CD8-positive, alpha-beta T cell (primary cell): ENCODE measurements at regions of chr10 and their contacts with region 1.

Region 1: DNA sequence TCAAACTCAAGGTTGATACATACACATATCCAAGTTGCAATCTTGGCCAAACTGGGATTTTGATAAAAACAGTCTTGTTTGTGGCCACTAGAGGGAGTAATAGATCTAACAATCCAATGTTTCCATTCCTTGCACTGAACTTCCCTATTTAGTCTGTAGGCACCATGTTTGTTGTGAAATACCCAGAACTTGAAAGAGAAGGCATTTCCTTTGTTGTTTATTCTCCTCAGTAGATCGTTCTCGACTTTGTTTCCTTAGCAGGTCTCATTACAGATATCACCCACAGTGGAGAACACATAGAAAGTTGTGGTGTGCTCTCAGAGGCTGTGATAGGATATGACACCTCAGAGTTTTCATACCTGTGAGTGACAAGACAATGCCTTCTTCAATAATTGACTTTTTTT is 70.3 kb upstream of the MXI1 start:
- DNase-seq: peak in 2 of 9 experiments; percentile 67 to 79
- ATAC-seq: peak; percentile 74
- H3K4me3 ChIP-seq: no peak overlapping the region
- H3K4me3 Mint-ChIP-seq: no peak overlapping the region
- H3K27ac ChIP-seq: peak overlapping the region in 1 of 2 experiments; percentile 2
- H3K27ac Mint-ChIP-seq: peak overlapping the region; percentile 23
- H3K4me1 ChIP-seq: peaks cover 9% of the 10 kb centered on the region
- H3K4me1 Mint-ChIP-seq: peaks cover 21% of the 10 kb centered on the region
- H3K27me3 ChIP-seq: no peaks in the 10 kb centered on the region
- H3K27me3 Mint-ChIP-seq: no peaks in the 10 kb centered on the region
- CTCF ChIP-seq: peak; percentile 97

Region 2: DNA sequence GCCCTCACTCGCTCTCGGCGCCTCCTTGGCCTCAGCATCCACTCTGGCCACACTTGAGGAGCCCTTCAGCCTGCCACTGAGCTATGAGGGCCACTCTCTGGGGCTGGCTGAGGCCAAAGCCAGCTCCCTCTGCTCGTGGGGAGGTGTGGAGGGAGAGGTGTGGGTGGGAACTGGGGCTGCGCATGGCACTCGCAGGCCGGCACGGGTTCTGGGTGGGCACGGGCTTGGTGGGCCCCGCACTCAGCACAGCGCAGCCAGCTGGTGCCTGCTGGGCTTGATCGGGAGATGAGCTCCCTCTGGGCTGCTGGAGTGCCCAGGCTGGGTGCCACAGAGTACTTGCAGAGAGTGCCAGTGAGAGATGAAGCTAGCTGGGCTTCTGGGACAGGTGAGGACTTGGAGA is 1089.3 kb before region 1 on chr10:
- CTCF ChIA-PET with region 1: no interaction called
- POLR2A ChIA-PET with region 1: no interaction called
- intact Hi-C with region 1: no loop called
- DNase-seq: no peak
- ATAC-seq: no peak
- H3K4me3 ChIP-seq: no peak overlapping the region
- H3K4me3 Mint-ChIP-seq: no peak overlapping the region
- H3K27ac ChIP-seq: no peak overlapping the region
- H3K27ac Mint-ChIP-seq: no peak overlapping the region
- H3K4me1 ChIP-seq: no peaks in the 10 kb centered on the region
- H3K4me1 Mint-ChIP-seq: no peaks in the 10 kb centered on the region
- H3K27me3 ChIP-seq: no peaks in the 10 kb centered on the region
- H3K27me3 Mint-ChIP-seq: no peaks in the 10 kb centered on the region
- CTCF ChIP-seq: no peak

Region 3: DNA sequence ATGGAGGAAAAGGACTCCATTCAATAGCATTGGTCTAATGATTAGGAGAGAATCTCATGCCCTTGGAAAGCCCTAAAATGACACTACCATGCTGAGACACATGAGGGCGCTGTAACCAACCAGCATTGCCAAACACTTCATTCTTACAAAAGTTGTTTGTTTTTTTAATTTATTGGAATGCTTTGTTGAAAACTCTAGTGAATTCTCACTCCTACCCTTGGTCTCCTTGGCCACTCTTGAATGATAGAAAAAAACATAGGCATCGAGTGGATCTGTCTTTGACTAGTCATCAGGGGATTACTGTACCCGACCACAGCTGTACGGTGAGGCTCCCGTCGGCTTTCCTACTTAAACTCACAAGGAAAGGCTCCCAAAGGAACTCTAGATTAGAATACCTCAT is 158.7 kb before region 1 on chr10:
- CTCF ChIA-PET with region 1: interaction called, 10 read pairs
- POLR2A ChIA-PET with region 1: no interaction called
- intact Hi-C with region 1: no loop called
- DNase-seq: peak; percentile 31 to 75 (median 71)
- ATAC-seq: peak; percentile 70
- H3K4me3 ChIP-seq: no peak overlapping the region
- H3K4me3 Mint-ChIP-seq: no peak overlapping the region
- H3K27ac ChIP-seq: no peak overlapping the region
- H3K27ac Mint-ChIP-seq: no peak overlapping the region
- H3K4me1 ChIP-seq: peaks cover 7% of the 10 kb centered on the region
- H3K4me1 Mint-ChIP-seq: peaks cover 16% of the 10 kb centered on the region
- H3K27me3 ChIP-seq: no peaks in the 10 kb centered on the region
- H3K27me3 Mint-ChIP-seq: no peaks in the 10 kb centered on the region
- CTCF ChIP-seq: peak; percentile 91

Region 4: GRCh38 chr10:110158051-110159005 is 21.2 kb after region 1 on chr10:
- CTCF ChIA-PET with region 1: interaction called, 11 read pairs
- POLR2A ChIA-PET with region 1: no interaction called
- intact Hi-C with region 1: loop called in 1 of 2 experiments (anchors 2 kb)
- DNase-seq: peak in 1 of 9 experiments; percentile 43
- ATAC-seq: no peak
- H3K4me3 ChIP-seq: no peak overlapping the region
- H3K4me3 Mint-ChIP-seq: no peak overlapping the region
- H3K27ac ChIP-seq: no peak overlapping the region
- H3K27ac Mint-ChIP-seq: no peak overlapping the region
- H3K4me1 ChIP-seq: peaks cover 24% of the 10 kb centered on the region
- H3K4me1 Mint-ChIP-seq: peaks cover 27% of the 10 kb centered on the region
- H3K27me3 ChIP-seq: peaks cover 43 to 59% of the 10 kb centered on the region in 2 experiments
- H3K27me3 Mint-ChIP-seq: peaks cover 79% of the 10 kb centered on the region
- CTCF ChIP-seq: no peak

Region 5: DNA sequence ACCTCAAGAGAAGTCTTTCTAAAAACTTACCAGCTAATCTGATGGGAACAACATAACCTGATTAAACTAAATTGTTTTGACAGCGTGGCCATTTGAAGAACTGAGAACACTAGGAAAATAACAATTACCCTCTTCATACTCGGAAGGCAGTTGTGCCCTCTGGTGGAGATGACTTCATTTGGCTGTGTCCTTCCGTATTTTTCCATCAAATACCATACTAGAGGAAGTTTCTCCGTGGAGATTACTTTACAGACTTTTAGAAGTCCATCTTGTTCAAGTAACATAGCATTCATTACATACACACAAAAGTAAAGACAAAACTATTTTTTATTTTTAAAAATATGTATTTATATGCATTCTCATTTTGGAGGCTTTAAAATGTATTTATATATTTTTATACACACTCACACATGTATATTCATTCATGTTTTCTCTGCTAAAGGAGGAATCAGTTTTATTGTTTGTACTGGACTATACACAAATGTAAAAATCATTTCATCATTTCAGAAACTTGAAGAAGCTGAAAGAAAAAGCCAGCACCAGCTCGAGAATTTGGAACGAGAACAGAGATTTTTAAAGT is 142.4 kb after region 1 on chr10:
- CTCF ChIA-PET with region 1: interaction called, 93 read pairs
- POLR2A ChIA-PET with region 1: interaction called, 4 read pairs
- intact Hi-C with region 1: loop called (anchors 1 kb)
- DNase-seq: peak in 8 of 9 experiments; percentile 6 to 76 (median 44)
- ATAC-seq: peak; percentile 81
- H3K4me3 ChIP-seq: no peak overlapping the region
- H3K4me3 Mint-ChIP-seq: no peak overlapping the region
- H3K27ac ChIP-seq: no peak overlapping the region
- H3K27ac Mint-ChIP-seq: no peak overlapping the region
- H3K4me1 ChIP-seq: peaks cover under 1% of the 10 kb centered on the region
- H3K4me1 Mint-ChIP-seq: peaks cover 15% of the 10 kb centered on the region
- H3K27me3 ChIP-seq: no peaks in the 10 kb centered on the region
- H3K27me3 Mint-ChIP-seq: no peaks in the 10 kb centered on the region
- CTCF ChIP-seq: peak; percentile 77

Region 6: DNA sequence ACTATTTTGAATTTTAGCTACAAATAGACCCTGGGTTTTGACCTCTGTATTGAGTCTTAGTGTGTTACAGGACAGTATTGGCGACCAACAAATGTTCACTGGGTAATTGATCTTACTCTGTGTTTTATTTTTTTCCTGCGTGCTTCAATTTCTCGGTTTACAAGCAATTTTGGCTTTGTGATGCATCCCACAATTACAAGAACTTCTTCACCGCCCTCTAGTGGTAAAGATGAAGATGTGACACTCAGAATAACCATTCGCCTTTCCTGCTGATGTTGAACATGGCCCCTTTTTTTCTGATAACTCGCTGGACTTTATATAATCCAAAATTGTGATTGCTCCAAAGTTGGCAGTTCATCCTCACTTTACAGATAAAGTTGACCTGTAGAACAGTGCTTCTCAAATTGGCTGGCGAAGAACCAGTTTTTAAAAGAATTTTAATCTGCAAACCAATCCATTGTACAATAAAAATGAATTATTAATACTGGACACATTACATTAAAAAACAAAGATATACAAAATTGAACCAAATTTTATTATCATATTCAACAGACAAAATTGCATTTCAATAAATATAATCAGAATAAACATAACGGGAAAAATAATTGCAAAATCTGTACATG is 410.1 kb after region 1 on chr10:
- CTCF ChIA-PET with region 1: interaction called, 6 read pairs
- POLR2A ChIA-PET with region 1: no interaction called
- intact Hi-C with region 1: loop called (anchors 1 to 5 kb)
- DNase-seq: peak in 2 of 9 experiments; percentile 66 to 79
- ATAC-seq: peak; percentile 88
- H3K4me3 ChIP-seq: no peak overlapping the region
- H3K4me3 Mint-ChIP-seq: no peak overlapping the region
- H3K27ac ChIP-seq: no peak overlapping the region
- H3K27ac Mint-ChIP-seq: no peak overlapping the region
- H3K4me1 ChIP-seq: no peaks in the 10 kb centered on the region
- H3K4me1 Mint-ChIP-seq: peaks cover 4% of the 10 kb centered on the region
- H3K27me3 ChIP-seq: no peaks in the 10 kb centered on the region
- H3K27me3 Mint-ChIP-seq: peaks cover 16% of the 10 kb centered on the region
- CTCF ChIP-seq: peak; percentile 92